ENCODE measurements at regions of chr11 and their contacts with region 1.

Region 1: GRCh38 chr11:68383976-68384501 is 71.6 kb downstream of the LRP5 start:
- DNase-seq: peak; percentile 77
- ATAC-seq: peak; percentile 39
- H3K4me3 Mint-ChIP-seq: no peak overlapping the region
- H3K27ac Mint-ChIP-seq: no peak overlapping the region
- H3K4me1 Mint-ChIP-seq: peaks cover 26% of the 10 kb centered on the region
- H3K27me3 Mint-ChIP-seq: peaks cover 9% of the 10 kb centered on the region

Region 2: DNA sequence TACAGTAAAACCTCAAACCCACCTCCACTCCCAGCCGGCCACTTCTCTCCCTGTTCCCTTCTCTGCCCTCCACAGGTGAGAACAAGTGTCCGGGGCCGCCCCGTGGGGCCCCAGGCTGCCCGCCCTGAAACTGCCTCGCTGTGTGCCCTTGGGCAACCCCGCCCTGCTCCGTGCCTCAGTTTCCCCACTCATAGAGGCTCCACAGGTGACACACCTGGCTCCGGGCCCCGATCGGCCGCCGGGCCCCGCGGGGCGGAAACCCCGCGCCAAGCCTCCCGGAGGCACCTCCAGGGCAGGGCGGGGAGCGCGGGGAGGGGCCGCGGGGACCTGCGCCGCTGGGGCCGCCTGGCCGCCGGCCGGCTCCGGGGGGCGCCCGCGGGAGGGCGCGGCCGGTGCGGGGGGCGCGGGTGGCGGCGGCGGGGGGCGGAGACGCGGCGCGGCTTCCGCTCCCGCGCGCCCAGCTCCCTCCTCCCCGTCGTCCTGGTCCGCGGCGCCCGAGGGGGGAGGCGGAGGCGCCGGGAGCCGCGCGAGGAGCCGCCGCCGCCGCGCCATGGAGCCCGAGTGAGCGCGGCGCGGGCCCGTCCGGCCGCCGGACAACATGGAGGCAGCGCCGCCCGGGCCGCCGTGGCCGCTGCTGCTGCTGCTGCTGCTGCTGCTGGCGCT is 71.8 kb before region 1 on chr11 and contains the start of gene LRP5:
- CTCF ChIA-PET with region 1: interaction called, 10 read pairs
- DNase-seq: no peak
- ATAC-seq: peak; percentile 70
- H3K4me3 Mint-ChIP-seq: peak within 1 kb of the TSS; percentile 76
- H3K27ac Mint-ChIP-seq: peak within 1 kb of the TSS; percentile 41
- H3K4me1 Mint-ChIP-seq: peaks cover 33% of the 10 kb centered on the region
- H3K27me3 Mint-ChIP-seq: peaks cover 38% of the 10 kb centered on the region
- total RNA-seq, gene LRP5: 15.6 to 16.2 TPM

Region 3: GRCh38 chr11:68532727-68533369 is 148.8 kb after region 1 on chr11:
- CTCF ChIA-PET with region 1: no interaction called
- DNase-seq: no peak
- ATAC-seq: no peak
- H3K4me3 Mint-ChIP-seq: no peak overlapping the region
- H3K27ac Mint-ChIP-seq: no peak overlapping the region
- H3K4me1 Mint-ChIP-seq: peaks cover 18% of the 10 kb centered on the region
- H3K27me3 Mint-ChIP-seq: no peaks in the 10 kb centered on the region